PC-3 (cell line): ENCODE measurements at regions of chr6 and their contacts with region 1.

Region 1: DNA sequence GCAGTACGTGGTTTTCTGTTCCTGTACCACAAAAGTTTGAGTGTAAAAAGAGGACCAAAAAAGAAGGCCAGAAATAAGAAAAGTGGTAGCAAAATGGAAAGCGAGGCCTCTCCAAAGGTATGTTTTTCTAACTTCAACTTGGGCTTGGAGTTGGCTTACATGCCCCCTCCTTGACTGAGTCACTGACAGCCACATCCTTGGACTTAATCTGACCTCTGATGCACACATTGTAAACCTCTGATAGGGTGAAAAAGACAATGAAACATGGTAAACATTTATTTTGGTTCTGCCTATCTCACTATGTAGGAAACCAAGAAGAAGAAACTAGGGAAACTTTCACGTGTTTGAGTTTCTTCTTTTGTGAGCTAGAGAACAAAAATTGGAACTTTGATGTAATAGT is 503.2 kb upstream of the ID4 start:
- DNase-seq: peak; percentile 96
- ATAC-seq: peak; percentile 92
- H3K4me3 ChIP-seq: peak overlapping the region; percentile 22; the same call in 1 of the 2 replicates
- H3K27ac ChIP-seq: peak overlapping the region; percentile 93
- H3K4me1 ChIP-seq: peaks cover 66% of the 10 kb centered on the region
- H3K27me3 ChIP-seq: no peaks in the 10 kb centered on the region
- CTCF ChIP-seq: no peak

Region 2: GRCh38 chr6:18632670-18633410 is 701.1 kb before region 1 on chr6:
- CTCF ChIA-PET with region 1: no interaction called
- POLR2A ChIA-PET with region 1: no interaction called
- intact Hi-C with region 1: loop called (anchors 5 kb)
- DNase-seq: peak; percentile 55
- ATAC-seq: no peak
- H3K4me3 ChIP-seq: no peak overlapping the region
- H3K27ac ChIP-seq: peak overlapping the region; percentile 20; the same call in 1 of the 2 replicates
- H3K4me1 ChIP-seq: peaks cover 8% of the 10 kb centered on the region
- H3K27me3 ChIP-seq: peaks cover 58% of the 10 kb centered on the region
- CTCF ChIP-seq: no peak

Region 3: GRCh38 chr6:19415585-19416326 is 81.8 kb after region 1 on chr6:
- CTCF ChIA-PET with region 1: no interaction called
- POLR2A ChIA-PET with region 1: no interaction called
- intact Hi-C with region 1: loop called (anchors 5 kb)
- DNase-seq: peak; percentile 92
- ATAC-seq: peak; percentile 82
- H3K4me3 ChIP-seq: no peak overlapping the region
- H3K27ac ChIP-seq: peak overlapping the region; percentile 89
- H3K4me1 ChIP-seq: peaks cover 59% of the 10 kb centered on the region
- H3K27me3 ChIP-seq: no peaks in the 10 kb centered on the region
- CTCF ChIP-seq: no peak

Region 4: GRCh38 chr6:19465760-19466159 is 131.8 kb after region 1 on chr6:
- CTCF ChIA-PET with region 1: no interaction called
- POLR2A ChIA-PET with region 1: no interaction called
- intact Hi-C with region 1: loop called (anchors 5 kb)
- DNase-seq: peak; percentile 96
- ATAC-seq: peak; percentile 85
- H3K4me3 ChIP-seq: peak overlapping the region; percentile 52
- H3K27ac ChIP-seq: peak overlapping the region; percentile 91
- H3K4me1 ChIP-seq: peaks cover 24% of the 10 kb centered on the region
- H3K27me3 ChIP-seq: no peaks in the 10 kb centered on the region
- CTCF ChIP-seq: no peak